Posterior vena cava (tissue), 2 donors: ENCODE measurements at regions of chr6 and their contacts with region 1.

Region 1: DNA sequence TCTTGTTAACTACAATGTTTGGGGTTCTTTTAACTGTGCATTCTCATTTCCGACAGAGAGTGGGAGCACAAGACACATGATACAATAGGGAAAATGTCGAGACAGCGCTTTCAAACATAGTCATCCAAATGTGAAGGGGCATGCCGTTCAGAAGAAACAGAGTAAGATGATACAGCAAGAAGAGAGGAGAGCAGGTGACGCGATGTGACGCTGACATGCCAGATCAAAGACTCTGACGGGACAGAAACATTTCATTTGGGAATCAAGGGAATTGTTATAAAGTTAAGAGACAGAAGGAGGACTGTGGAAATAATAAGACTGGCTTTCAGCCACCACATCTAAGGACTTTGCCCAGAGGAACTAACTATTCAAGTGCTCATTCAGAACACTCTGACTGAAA is 117.4 kb downstream of the FAXC start:
- DNase-seq: no peak

Region 2: GRCh38 chr6:97778290-97779038 is 1453.6 kb before region 1 on chr6:
- intact Hi-C with region 1: no loop called
- DNase-seq: no peak

Region 3: GRCh38 chr6:98678481-98678880 is 553.6 kb before region 1 on chr6:
- intact Hi-C with region 1: no loop called
- DNase-seq: no peak

Region 4: GRCh38 chr6:99151634-99152344 is 80.3 kb before region 1 on chr6:
- intact Hi-C with region 1: loop called in 1 of 2 experiments (anchors 2 kb)
- DNase-seq: no peak

Region 5: GRCh38 chr6:99254616-99255550 is 22.8 kb after region 1 on chr6:
- intact Hi-C with region 1: no loop called
- DNase-seq: no peak

Region 6: DNA sequence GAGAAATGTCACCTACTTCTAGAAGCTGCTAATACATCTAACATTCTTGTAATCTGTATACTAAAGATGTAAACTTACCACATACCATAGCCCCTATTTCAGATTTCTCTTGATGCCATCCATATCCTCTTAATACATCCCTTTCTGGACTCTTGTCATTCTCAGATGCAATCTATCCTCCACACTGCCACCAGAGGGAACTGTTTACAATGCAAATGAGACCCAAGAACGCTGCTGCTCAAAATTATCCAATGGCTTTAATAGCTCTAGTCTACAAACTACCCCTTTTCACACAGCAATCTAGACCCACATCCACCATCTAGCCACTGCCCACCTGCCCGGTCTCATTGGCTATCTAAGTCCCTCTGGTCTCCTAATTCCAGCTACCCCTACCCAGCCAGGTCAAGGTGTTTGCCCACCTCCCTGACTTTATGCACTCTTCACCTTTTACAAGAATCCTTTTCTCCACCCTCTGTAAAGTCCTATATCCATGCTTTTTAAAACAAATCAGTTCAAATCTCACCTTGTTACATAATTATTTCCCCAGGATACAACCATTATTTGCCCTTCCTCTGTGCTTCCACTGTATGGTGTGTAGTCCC is 102.6 kb after region 1 on chr6:
- intact Hi-C with region 1: no loop called
- DNase-seq: no peak